Heart left ventricle (tissue), 16 donors: ENCODE measurements at regions of chr17 and their contacts with region 1.

Region 1: DNA sequence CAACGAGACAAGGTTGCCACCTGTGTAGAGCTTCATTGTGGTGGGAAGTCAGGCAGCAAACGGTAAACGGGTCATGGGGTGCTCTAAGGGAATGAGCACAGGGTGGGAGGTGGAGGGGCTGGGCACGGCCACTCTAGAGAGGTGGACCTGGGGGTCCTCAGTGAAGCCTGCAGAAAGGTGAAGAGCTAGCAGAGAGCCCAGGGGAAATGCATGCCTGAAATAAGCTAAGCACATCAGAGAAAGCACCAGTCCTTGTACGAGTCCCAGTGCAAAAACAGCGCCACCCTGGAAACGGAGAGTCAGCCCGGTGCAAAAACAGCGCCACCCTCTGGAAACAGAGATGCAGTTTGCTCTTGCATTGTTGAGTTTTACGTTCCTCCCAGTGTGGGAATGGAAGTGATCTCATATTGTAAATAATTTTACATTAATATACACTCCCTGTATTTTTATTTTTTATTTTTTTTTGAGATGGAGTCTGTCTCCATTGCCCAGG is 65.0 kb downstream of the TBC1D16 start:
- DNase-seq: peak in 1 of 5 donors; percentile 62
- ATAC-seq: peak in 2 of 4 donors; percentile 46 to 47
- H3K4me3 ChIP-seq: no peak overlapping the region
- H3K27ac ChIP-seq: no peak overlapping the region
- H3K4me1 ChIP-seq: no peaks in the 10 kb centered on the region
- H3K27me3 ChIP-seq: no peaks in the 10 kb centered on the region
- CTCF ChIP-seq: peak in 11 of 12 donors; percentile 20 to 49 (median 44)
- POLR2A ChIP-seq: no peak

Region 2: DNA sequence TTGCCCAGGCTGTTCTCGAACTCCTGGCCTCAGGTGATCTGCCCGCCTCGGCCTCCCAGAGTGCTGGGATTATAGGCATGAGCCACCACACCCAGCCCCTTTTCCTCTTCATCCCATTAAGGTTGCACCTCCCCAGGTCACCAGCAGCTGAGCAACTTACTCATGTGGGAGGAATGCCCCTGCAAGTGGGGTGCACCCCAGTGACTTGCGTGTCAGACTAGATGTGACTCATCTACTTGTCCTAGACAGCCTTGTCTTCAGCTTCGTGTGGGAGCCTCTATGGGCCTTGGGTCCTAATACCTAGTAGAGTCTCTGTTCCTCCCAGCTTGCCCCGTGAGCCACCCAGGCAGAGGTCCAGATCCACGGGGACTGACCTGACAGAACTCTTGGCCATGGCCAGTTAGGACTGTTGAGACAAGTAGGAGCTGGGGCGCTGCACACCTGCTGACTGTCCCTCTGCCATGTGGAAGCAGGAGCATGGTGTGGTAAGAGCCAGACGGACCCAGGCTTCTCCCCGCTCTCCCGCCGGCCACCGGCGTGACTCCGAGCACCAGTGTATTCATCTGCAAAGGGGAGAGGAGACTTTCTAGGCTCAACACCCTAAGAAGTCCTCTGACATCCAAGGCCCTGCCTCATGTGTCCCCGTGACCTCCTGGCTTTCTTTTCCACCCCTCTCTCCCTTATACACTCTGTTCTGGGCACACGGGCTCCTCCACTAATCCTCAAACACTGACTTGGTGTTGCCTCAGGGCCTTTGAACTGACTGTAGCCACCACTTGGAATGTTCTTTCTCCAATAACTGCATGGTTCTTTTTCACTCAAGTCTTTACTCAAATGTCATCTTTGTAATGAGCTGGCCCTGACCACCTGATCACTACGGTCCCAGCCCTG is 119.8 kb before region 1 on chr17:
- intact Hi-C with region 1: loop called in 1 of 10 experiments (anchors 10 kb)
- DNase-seq: peak in 1 of 5 donors; percentile 20
- ATAC-seq: no peak
- H3K4me3 ChIP-seq: no peak overlapping the region
- H3K27ac ChIP-seq: no peak overlapping the region
- H3K4me1 ChIP-seq: peaks cover 0 to 15% (median under 1%) of the 10 kb centered on the region in 12 donors
- H3K27me3 ChIP-seq: peaks cover 0 to 12% (median 0%) of the 10 kb centered on the region in 9 donors
- CTCF ChIP-seq: no peak
- POLR2A ChIP-seq: no peak

Region 3: GRCh38 chr17:79888811-79889634 is 81.6 kb before region 1 on chr17:
- intact Hi-C with region 1: no loop called
- DNase-seq: no peak
- ATAC-seq: no peak
- H3K4me3 ChIP-seq: no peak overlapping the region
- H3K27ac ChIP-seq: no peak overlapping the region
- H3K4me1 ChIP-seq: peaks cover 0 to 15% (median 11%) of the 10 kb centered on the region in 12 donors
- H3K27me3 ChIP-seq: peaks cover 0 to 75% (median 19%) of the 10 kb centered on the region in 9 donors
- CTCF ChIP-seq: no peak
- POLR2A ChIP-seq: no peak

Region 4: DNA sequence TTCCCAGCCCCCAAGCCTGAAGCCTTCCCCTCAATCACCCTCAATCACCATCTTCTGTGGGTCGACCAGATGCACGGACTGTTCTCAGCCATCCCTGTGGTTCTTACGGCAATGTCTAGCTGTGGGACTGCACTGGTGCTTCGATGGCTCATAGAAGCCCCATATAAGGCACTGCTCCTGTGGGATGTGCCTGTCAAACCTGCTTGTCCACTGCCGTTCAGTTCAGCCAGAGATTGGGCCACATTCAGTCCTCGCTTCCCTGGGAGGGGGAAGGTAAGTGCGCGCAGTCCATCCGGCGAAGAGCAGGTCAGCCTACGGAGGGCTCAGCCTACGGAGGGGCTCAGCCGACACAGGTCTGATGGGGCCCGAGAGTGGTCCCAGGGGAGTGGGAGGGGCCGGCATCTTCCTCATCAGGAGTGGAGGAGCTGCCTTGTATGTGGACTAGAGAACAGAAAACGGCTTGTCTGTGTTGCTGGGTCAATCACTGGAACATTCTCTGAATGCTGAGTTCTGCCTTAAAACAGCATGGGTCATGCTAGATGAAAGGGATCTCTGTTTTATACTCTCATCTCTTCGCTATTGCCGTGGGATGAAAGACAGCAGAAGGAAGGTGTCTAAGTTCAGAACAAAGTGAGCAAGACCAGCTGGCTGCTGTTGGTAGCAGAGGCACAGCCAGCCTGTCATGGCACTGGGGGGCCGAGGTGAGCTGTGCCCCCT is 199.3 kb after region 1 on chr17 and contains the start of gene CARD14:
- intact Hi-C with region 1: no loop called
- DNase-seq: no peak
- ATAC-seq: no peak
- H3K4me3 ChIP-seq: no peak within 1 kb of the TSS
- H3K27ac ChIP-seq: no peak within 1 kb of the TSS
- H3K4me1 ChIP-seq: no peaks in the 10 kb centered on the region
- H3K27me3 ChIP-seq: peaks cover 0 to 4% (median 0%) of the 10 kb centered on the region in 9 donors
- CTCF ChIP-seq: no peak
- POLR2A ChIP-seq: no peak
- total RNA-seq, gene CARD14: 0.18 to 0.44 (median 0.19) TPM in 4 of 9 donors, not detected in the others